ENCODE measurements at regions of chr19 and their contacts with region 1.

Region 1: GRCh38 chr19:49665351-49666119 is at the starts of genes BCL2L12 and IRF3:
- DNase-seq: peak; percentile 100
- total RNA-seq, gene BCL2L12: 8.5 to 9.3 TPM
- total RNA-seq, gene IRF3: 40.6 to 50.9 TPM

Region 2: GRCh38 chr19:49512970-49513745 is 152.4 kb before region 1 on chr19:
- intact Hi-C with region 1: loop called in 1 of 2 experiments (anchors 10 kb)
- DNase-seq: peak; percentile 87

Measured in posterior vena cava (tissue), 2 donors.